ENCODE measurements at regions of chr3 and their contacts with region 1.

Region 1: GRCh38 chr3:182490596-182491491 is 302.5 kb upstream of the ATP11B start:
- DNase-seq: peak; percentile 9
- ATAC-seq: no peak
- H3K4me3 Mint-ChIP-seq: no peak overlapping the region
- H3K27ac Mint-ChIP-seq: no peak overlapping the region
- H3K4me1 Mint-ChIP-seq: no peaks in the 10 kb centered on the region
- H3K27me3 Mint-ChIP-seq: no peaks in the 10 kb centered on the region

Region 2: GRCh38 chr3:181210275-181210674 is 1280.6 kb before region 1 on chr3:
- CTCF ChIA-PET with region 1: no interaction called
- POLR2A ChIA-PET with region 1: no interaction called
- intact Hi-C with region 1: loop called in 1 of 2 experiments (anchors 2 kb)
- DNase-seq: no peak
- ATAC-seq: no peak
- H3K4me3 Mint-ChIP-seq: no peak overlapping the region
- H3K27ac Mint-ChIP-seq: no peak overlapping the region
- H3K4me1 Mint-ChIP-seq: no peaks in the 10 kb centered on the region
- H3K27me3 Mint-ChIP-seq: peaks cover 2% of the 10 kb centered on the region

Region 3: DNA sequence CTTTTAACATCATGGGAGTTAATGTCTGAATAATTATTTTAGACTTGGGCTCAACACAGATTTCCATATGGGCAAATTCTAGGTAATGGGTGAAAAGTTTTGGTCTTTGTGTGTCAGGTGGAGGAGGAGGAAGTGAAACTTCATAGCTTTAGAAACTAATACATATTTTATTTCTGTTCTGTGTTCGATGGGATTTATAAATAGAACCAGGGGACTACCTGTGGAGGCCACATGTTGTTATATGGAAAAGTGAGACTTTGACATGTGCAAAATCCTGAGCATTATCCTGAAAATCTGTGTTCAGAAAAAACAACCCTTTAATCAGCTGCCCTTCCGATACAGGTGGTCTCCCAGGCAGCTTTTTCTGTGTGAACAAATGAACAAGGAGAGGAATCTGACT is 569.6 kb before region 1 on chr3:
- CTCF ChIA-PET with region 1: no interaction called
- POLR2A ChIA-PET with region 1: no interaction called
- intact Hi-C with region 1: no loop called
- DNase-seq: no peak
- ATAC-seq: no peak
- H3K4me3 Mint-ChIP-seq: no peak overlapping the region
- H3K27ac Mint-ChIP-seq: no peak overlapping the region
- H3K4me1 Mint-ChIP-seq: no peaks in the 10 kb centered on the region
- H3K27me3 Mint-ChIP-seq: peaks cover 2% of the 10 kb centered on the region

Measured in activated CD4-positive, alpha-beta T cell treated with anti-CD3 and anti-CD28 coated beads for 36 hours (primary cell).